WTC11 (cell line): ENCODE measurements at regions of chr1 and their contacts with region 1.

Region 1: GRCh38 chr1:231931846-231932454 is 305.4 kb downstream of the DISC1 start:
- DNase-seq: peak; percentile 74
- ATAC-seq: peak; percentile 60
- H3K4me3 Mint-ChIP-seq: no peak overlapping the region
- H3K27ac Mint-ChIP-seq: no peak overlapping the region
- H3K4me1 Mint-ChIP-seq: peaks cover 32% of the 10 kb centered on the region
- H3K27me3 Mint-ChIP-seq: peaks cover 20% of the 10 kb centered on the region
- CTCF ChIP-seq: peak; percentile 90

Region 2: DNA sequence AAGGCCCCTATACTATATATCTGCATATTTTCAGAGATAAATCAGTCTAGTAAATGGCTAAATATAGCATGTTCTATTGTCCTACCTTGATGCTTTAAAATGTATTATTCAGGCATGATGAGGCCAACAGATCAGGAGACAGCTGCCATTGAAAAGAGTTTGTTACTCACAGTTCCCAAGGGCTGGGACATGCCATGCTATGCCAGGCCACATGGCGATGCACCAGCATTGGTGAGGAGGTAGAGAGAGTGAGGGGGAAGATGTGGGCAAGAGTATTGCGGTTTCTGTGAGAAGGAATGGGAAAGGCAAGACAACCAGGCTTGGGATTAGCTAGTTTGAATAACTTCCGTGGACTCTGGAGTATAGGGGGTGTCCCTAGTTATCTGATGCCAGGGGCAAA is 11.1 kb after region 1 on chr1:
- CTCF ChIA-PET with region 1: interaction called, 12 read pairs
- POLR2A ChIA-PET with region 1: no interaction called
- DNase-seq: no peak
- ATAC-seq: no peak
- H3K4me3 Mint-ChIP-seq: no peak overlapping the region
- H3K27ac Mint-ChIP-seq: no peak overlapping the region
- H3K4me1 Mint-ChIP-seq: 0 out of 2 replicates have a peak, but pooled peaks cover 5% of the 10 kb centered on the region
- H3K27me3 Mint-ChIP-seq: peaks cover 21% of the 10 kb centered on the region
- CTCF ChIP-seq: no peak